ENCODE measurements at regions of chr7 and their contacts with region 1.

Region 1: DNA sequence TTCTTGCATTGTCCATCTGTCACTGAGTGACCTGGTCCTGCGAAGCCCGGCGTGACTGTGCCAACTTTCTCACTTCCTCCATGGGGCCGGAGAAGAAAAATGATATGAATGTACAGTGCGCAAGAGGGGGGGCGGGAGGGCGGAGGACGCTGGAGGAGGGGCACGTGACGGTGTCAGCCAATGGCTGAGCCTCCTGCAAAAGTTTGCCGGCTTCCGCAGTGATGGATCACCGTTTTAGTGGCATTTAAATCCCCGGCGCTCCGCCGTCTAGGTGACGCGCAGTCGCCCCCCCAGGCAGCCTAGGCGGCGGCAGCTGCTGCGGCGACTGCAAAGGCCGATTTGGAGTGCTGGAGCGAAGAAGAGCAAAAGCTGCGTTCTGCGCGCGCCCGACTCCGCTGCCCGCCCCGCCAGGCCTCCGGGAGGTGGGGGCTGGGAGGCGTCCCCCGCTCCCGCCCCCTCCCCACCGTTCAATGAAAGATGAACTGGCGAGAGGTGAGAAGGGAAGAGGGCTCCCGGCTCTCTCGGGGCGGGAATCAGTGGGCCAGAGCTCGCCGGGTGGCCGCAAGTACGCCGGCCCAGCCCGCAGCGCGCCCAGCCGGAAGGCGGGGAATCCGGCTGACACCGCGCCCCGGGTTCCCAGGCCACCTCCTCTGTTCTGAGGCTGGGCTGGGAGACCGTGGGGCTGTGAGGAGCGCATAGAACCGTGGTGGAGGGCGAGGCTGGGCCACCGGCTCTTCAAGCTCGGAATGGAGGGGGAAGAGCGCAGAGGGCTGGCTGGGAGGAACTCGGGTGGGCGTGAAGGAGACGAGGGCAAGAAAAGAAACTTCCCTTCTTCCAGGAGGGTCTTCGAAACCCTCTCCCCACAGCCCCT is at the start of gene HOXA1:
- DNase-seq: peak; percentile 67
- ATAC-seq: peak; percentile 87
- H3K4me3 Mint-ChIP-seq: peak within 1 kb of the TSS; percentile 94
- H3K27ac Mint-ChIP-seq: peak within 1 kb of the TSS; percentile 76
- H3K4me1 Mint-ChIP-seq: peaks cover 33% of the 10 kb centered on the region
- H3K27me3 Mint-ChIP-seq: peaks cover 52% of the 10 kb centered on the region
- CTCF ChIP-seq: no peak
- total RNA-seq, gene HOXA1: 0.55 and 0.61 TPM in 2 replicates

Region 2: GRCh38 chr7:26291699-26292538 is 804.2 kb before region 1 on chr7 and contains the start of gene SNX10:
- CTCF ChIA-PET with region 1: no interaction called
- POLR2A ChIA-PET with region 1: no interaction called
- intact Hi-C with region 1: loop called (anchors 5 kb)
- DNase-seq: peak; percentile 76
- ATAC-seq: peak; percentile 77
- H3K4me3 Mint-ChIP-seq: peak within 1 kb of the TSS; percentile 92
- H3K27ac Mint-ChIP-seq: peak within 1 kb of the TSS; percentile 95
- H3K4me1 Mint-ChIP-seq: peaks cover 51% of the 10 kb centered on the region
- H3K27me3 Mint-ChIP-seq: no peaks in the 10 kb centered on the region
- CTCF ChIP-seq: no peak
- total RNA-seq, gene SNX10: 28.9 and 32.3 TPM in 2 replicates

Region 3: DNA sequence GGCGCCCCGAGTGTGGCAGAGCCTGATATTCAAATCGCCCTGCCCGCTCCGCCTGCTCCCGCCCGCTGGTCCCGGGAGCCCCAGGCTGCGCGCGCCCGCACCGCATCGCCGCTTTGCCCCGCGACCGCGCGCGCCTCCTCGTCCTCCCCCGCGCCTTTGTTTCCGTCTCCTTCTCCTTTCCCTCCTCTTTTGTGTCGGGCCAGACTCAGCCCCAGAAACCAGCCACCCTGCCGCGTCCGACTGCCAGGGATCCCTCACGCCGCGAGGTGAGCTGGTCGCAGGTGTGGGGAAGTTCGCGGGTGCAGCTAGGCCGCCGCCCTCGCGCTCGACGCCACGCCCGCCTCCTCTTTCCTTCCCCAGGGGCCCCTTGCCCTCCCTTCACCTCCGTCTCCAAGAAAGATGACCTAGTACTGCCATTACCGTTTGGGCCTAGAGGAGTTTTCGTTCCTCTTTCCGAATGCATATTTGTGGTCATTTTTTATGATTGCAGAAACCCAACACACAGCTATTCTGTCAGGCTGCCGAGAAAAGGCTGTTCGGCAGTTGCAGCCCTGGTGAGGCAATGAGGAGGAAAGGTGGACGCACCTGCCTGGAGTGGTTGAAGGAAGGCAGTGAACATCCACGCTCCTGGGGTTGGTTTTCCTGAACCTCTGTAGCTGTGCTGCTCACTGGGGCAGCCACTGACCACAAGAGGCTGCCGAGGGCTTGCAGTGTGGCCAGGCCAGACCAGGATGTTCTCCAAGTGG is 697.2 kb before region 1 on chr7:
- CTCF ChIA-PET with region 1: no interaction called
- POLR2A ChIA-PET with region 1: no interaction called
- intact Hi-C with region 1: loop called (anchors 5 kb)
- DNase-seq: peak; percentile 83
- ATAC-seq: peak; percentile 89
- H3K4me3 Mint-ChIP-seq: peak overlapping the region; percentile 98
- H3K27ac Mint-ChIP-seq: peak overlapping the region; percentile 98
- H3K4me1 Mint-ChIP-seq: peaks cover 36% of the 10 kb centered on the region
- H3K27me3 Mint-ChIP-seq: no peaks in the 10 kb centered on the region
- CTCF ChIP-seq: no peak

Region 4: GRCh38 chr7:26705567-26705966 is 390.6 kb before region 1 on chr7:
- CTCF ChIA-PET with region 1: no interaction called
- POLR2A ChIA-PET with region 1: no interaction called
- intact Hi-C with region 1: no loop called
- DNase-seq: no peak
- ATAC-seq: no peak
- H3K4me3 Mint-ChIP-seq: no peak overlapping the region
- H3K27ac Mint-ChIP-seq: no peak overlapping the region
- H3K4me1 Mint-ChIP-seq: peaks cover 2% of the 10 kb centered on the region
- H3K27me3 Mint-ChIP-seq: no peaks in the 10 kb centered on the region
- CTCF ChIP-seq: no peak

Region 5: GRCh38 chr7:26853788-26854393 is 242.2 kb before region 1 on chr7:
- CTCF ChIA-PET with region 1: interaction called, 11 read pairs
- POLR2A ChIA-PET with region 1: no interaction called
- intact Hi-C with region 1: loop called (anchors 2 kb)
- DNase-seq: no peak
- ATAC-seq: no peak
- H3K4me3 Mint-ChIP-seq: no peak overlapping the region
- H3K27ac Mint-ChIP-seq: no peak overlapping the region
- H3K4me1 Mint-ChIP-seq: peaks cover 30% of the 10 kb centered on the region
- H3K27me3 Mint-ChIP-seq: no peaks in the 10 kb centered on the region
- CTCF ChIP-seq: no peak

Region 6: DNA sequence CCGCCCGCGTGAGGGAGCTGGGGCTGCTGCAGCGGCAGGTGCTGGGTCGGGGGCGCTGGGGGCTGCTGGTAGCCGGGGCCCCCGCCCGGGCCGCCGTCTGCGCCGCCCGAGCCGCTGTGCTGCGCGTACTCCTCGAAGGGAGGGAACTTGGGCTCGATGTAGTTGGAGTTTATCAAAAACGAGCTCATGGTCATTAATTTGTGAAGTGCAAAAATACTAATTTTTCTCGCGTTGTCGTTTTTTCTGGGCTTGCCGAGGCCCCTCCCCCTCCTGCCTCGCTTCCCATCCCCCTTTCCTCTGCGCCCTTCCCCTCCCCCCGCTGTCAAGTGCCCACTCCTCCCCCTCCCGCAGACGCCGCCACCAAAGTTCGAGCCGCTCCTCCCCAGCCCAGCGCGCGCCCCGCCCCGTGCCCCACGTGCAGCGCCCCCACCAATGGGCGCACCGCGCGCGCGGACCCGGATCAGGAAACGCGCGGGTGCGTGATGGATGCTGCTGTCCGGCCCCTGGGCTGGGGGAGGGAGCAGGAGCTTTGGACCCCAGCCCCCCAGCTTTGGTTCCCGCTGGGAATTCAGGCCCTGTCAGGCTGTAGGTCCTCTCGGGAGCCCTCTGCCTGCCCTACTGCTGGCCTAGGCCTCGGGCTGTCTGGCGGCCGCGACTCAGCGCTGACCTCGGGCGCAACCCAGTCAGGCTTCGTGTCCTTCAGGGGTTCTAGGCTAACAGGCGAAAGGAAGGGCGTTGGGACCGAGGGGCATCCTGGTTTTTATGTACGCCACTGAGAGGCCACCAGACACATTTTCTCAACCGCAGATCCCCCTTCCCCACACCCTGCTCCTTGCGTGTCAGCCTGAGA is 34.6 kb after region 1 on chr7 and contains the start of gene HOXA4:
- CTCF ChIA-PET with region 1: no interaction called
- POLR2A ChIA-PET with region 1: interaction called, 16 read pairs
- intact Hi-C with region 1: loop called (anchors 2 kb)
- DNase-seq: peak; percentile 70
- ATAC-seq: peak; percentile 96
- H3K4me3 Mint-ChIP-seq: peak within 1 kb of the TSS; percentile 76
- H3K27ac Mint-ChIP-seq: no peak within 1 kb of the TSS
- H3K4me1 Mint-ChIP-seq: peaks cover 2% of the 10 kb centered on the region
- H3K27me3 Mint-ChIP-seq: peaks cover 40% of the 10 kb centered on the region
- CTCF ChIP-seq: no peak
- total RNA-seq, gene HOXA4: 0.17 and 0.40 TPM in 2 replicates

Region 7: GRCh38 chr7:27235387-27236311 is 139.5 kb after region 1 on chr7:
- CTCF ChIA-PET with region 1: no interaction called
- POLR2A ChIA-PET with region 1: no interaction called
- intact Hi-C with region 1: loop called (anchors 5 kb)
- DNase-seq: no peak
- ATAC-seq: no peak
- H3K4me3 Mint-ChIP-seq: no peak overlapping the region
- H3K27ac Mint-ChIP-seq: no peak overlapping the region
- H3K4me1 Mint-ChIP-seq: peaks cover 15% of the 10 kb centered on the region
- H3K27me3 Mint-ChIP-seq: peaks cover 60% of the 10 kb centered on the region
- CTCF ChIP-seq: no peak

Region 8: DNA sequence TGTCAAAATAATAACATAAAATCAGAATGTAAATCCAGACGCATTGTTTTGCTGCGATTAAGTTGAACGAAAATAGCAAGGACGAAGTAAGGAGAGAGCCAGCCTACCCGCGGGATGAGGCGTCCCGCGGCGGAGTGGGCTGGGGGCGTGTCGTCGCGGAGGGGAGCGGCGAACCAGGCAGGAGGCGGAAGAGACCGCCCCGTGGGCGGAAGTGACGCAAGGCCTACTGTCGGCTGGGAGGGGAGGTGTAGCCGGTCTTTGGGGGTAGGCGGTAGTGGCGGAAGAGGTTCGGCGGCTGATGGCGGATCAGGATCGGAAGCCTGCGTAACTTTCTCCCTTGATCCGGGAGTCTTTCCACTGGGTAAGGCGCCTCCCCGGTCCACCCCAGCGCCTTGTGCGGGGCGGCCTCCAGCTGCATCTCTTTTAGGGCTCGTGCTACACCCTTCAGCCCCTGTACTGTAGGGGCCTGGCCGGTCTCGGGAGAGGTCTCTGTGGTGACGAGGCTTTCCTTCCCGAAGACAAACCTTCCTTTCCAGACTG is 643.8 kb after region 1 on chr7 and contains the start of gene TAX1BP1:
- CTCF ChIA-PET with region 1: no interaction called
- POLR2A ChIA-PET with region 1: no interaction called
- intact Hi-C with region 1: loop called (anchors 5 kb)
- DNase-seq: peak; percentile 92
- ATAC-seq: peak; percentile 93
- H3K4me3 Mint-ChIP-seq: peak within 1 kb of the TSS; percentile 95
- H3K27ac Mint-ChIP-seq: peak within 1 kb of the TSS; percentile 96
- H3K4me1 Mint-ChIP-seq: peaks cover 36% of the 10 kb centered on the region
- H3K27me3 Mint-ChIP-seq: no peaks in the 10 kb centered on the region
- CTCF ChIP-seq: no peak
- total RNA-seq, gene TAX1BP1: 61.4 and 64.7 TPM in 2 replicates

Region 9: DNA sequence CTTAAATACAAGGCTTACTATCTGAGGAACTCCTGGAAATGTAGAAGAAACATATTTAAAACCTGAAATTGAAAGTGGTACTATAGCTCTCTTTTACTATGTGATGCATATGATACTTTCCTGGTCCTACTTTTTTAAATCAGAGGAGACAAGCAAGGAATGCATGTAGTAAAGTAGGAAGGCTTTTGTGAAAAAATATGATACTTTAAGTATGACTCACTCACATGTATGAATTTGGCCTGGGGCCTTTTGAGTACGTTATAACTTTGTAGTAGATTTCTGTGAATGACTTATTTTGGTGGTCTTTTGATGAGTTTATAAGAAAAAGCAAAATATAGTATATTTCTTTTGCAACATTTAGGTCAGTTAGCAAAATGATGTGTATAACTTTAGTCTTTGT is 697.6 kb after region 1 on chr7:
- CTCF ChIA-PET with region 1: no interaction called
- POLR2A ChIA-PET with region 1: no interaction called
- intact Hi-C with region 1: no loop called
- DNase-seq: no peak
- ATAC-seq: no peak
- H3K4me3 Mint-ChIP-seq: no peak overlapping the region
- H3K27ac Mint-ChIP-seq: no peak overlapping the region
- H3K4me1 Mint-ChIP-seq: no peaks in the 10 kb centered on the region
- H3K27me3 Mint-ChIP-seq: no peaks in the 10 kb centered on the region
- CTCF ChIP-seq: no peak

Measured in activated B cell treated with CpG ODN at 0.5 μM for 24 hours (primary cell).